Head of caudate nucleus (tissue), 42 donors: ENCODE measurements at regions of chr12 and their contacts with region 1.

Region 1: GRCh38 chr12:109880016-109880931 is at the start of gene GLTP:
- DNase-seq: peak; percentile 30 to 92 (median 84)

Region 2: DNA sequence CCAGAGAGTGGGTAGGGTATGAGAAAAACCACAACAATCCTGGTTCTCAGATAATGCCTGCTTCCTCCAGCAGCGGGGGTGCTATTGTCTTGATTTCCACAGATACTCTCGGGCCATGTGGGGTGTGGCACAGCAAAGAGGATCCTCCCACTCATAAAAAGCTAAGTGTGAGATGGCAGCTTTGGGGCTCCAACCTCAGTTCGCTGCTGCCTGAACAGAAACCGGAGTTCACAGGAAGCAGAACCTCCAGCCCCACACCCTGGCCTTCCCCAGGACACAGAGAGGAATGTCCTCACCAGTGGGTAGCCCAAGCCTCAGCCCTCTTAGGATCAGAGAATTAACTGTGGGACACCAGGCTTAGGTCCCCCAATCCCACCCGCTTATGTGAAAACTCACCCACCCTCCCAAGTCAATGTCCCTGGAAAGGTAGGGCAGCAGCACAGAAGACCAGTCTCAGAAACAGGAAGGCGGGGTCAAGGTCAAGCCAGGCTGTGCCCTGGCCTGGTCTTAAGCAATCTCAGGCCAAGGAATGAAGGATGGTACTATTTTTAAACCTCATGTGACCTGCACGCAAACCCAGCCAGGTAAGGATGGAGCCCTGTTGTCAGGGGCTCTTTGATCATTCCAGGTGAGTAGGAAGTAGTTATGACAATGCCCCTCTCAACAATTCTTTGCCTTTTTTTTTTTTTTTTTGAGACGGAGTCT is 412.1 kb before region 1 on chr12:
- intact Hi-C with region 1: no loop called
- DNase-seq: peak in 19 of 42 donors; percentile 15 to 72 (median 39)

Region 3: GRCh38 chr12:109844983-109845823 is 35.1 kb before region 1 on chr12:
- intact Hi-C with region 1: loop called (anchors 2 kb)
- DNase-seq: peak; percentile 65 to 95 (median 90)

Region 4: GRCh38 chr12:110039085-110039807 is 159.0 kb after region 1 on chr12:
- intact Hi-C with region 1: no loop called
- DNase-seq: peak in 7 of 42 donors; percentile 26 to 53 (median 42)